Mammary epithelial cell (primary cell): ENCODE measurements at regions of chr7 and their contacts with region 1.

Region 1: GRCh38 chr7:78587443-78588044 is 789.0 kb downstream of the PHTF2 start:
- DNase-seq: no peak
- H3K4me3 ChIP-seq: no peak overlapping the region
- H3K27ac ChIP-seq: no peak overlapping the region
- H3K4me1 ChIP-seq: no peaks in the 10 kb centered on the region
- H3K27me3 ChIP-seq: peaks cover 3% of the 10 kb centered on the region
- CTCF ChIP-seq: peak; percentile 52 to 56

Region 2: DNA sequence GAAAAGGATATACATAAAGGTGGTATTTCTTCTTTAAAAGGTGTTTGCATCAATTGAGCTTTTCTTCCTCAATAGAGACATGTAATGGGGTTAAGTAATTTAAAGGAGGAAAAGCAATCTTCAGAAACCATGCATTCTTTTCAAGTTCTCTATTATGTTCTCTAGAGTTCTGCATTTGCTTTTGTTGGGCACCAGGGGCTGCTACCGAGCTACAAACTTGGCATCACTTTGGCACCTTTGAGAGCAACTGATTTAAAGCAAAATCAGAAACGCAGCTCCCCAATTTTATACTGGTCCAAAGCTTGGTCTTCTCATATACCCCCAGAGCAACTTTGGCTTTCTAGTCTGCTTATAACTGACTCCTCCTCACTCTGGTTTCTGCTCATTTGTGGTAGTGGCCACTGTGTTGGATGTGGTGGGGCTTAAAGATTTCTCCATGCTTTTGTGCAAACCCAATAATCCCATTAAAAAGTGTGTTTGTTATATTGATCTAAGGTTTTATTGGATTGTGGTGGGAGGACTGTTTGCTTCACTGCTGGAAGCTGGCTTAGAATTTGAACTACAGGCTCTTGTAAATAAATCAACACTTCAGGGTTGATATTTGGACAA is 76.9 kb before region 1 on chr7:
- CTCF ChIA-PET with region 1: no interaction called
- dilution Hi-C with region 1: no loop called
- in situ Hi-C with region 1: no loop called
- intact Hi-C with region 1: loop called (anchors 2 kb)
- DNase-seq: peak; percentile 15
- H3K4me3 ChIP-seq: no peak overlapping the region
- H3K27ac ChIP-seq: no peak overlapping the region
- H3K4me1 ChIP-seq: no peaks in the 10 kb centered on the region
- H3K27me3 ChIP-seq: no peaks in the 10 kb centered on the region
- CTCF ChIP-seq: peak; percentile 82 to 90